Heart right ventricle (tissue), 16 donors: ENCODE measurements at regions of chr7 and their contacts with region 1.

Region 1: DNA sequence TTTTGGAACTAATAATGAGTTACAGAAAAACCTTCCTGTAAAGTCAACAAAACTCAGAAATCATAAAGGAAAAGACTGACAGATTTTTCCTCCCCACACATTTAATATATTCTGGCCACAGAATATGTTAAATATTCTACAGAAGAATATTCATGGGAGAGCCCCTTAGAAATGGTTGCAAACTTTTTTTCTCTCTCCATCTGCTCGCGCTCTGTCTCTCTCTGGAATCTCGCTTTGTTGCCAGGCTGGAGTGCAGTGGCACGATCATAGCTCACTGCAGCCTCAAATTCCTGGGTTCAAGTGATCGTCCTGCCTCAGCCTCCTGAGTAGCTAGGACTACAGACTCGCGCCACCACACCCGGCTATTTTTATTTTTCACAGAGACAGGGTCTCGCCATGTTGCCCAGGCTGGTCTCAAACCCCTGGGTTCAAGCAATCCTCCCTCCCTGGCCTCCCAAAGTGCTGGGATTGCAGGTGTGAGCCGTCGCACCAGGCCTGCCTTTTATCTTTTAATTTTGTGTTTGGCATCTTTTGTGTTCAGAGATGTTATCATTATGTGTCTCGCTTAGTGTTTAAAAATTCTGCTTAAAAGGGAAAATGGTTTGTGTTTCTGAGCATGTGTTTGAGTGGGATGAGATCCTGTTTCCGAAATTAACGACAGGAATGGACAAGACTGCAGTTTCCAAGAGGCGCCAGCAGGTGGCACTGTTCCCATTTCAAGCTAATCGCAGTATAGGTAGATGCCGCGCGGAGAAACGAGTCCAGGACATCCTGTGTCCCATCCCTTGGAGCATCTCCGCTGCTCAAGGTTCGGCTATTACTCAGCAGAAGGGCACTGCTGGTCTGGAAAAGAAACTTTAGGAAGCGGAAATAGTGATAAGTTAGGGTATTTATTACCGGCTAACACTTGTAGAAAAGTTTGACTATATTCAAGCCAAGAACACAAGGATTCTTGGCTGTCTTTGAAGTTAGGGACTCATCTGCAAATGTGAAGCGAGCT is 23.1 kb upstream of the ST7 start:
- DNase-seq: peak; percentile 80 to 82
- ATAC-seq: peak; percentile 76 to 92 (median 88)
- H3K4me3 ChIP-seq: no peak overlapping the region
- H3K27ac ChIP-seq: no peak overlapping the region
- H3K4me1 ChIP-seq: peaks cover 0 to 8% (median 0%) of the 10 kb centered on the region in 9 donors
- H3K27me3 ChIP-seq: no peaks in the 10 kb centered on the region
- CTCF ChIP-seq: peak; percentile 90 to 95 (median 92)

Region 2: DNA sequence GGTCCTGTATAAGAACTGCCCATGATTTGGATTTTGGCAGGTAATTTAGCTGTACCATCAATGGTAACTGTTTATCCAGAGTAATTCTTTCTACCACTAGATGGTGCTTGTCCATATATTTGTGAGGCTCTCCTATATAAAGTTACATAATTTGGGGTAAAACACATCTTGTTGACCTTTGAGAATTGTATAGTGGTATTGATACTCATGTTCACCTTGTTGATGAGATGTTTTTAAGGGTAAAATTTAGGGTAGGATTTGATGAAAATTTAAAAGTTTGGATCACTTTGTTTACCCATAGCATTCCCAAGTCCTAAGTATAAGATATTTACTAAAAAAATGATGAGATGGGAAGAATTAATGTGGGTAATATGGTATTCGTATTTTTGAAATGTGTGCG is 54.7 kb after region 1 on chr7:
- intact Hi-C with region 1: loop called in 5 of 10 experiments (anchors 10 kb)
- DNase-seq: no peak
- ATAC-seq: peak in 1 of 8 donors; percentile 33
- H3K4me3 ChIP-seq: no peak overlapping the region
- H3K27ac ChIP-seq: no peak overlapping the region
- H3K4me1 ChIP-seq: peaks cover 0 to 23% (median 0%) of the 10 kb centered on the region in 9 donors
- H3K27me3 ChIP-seq: no peaks in the 10 kb centered on the region
- CTCF ChIP-seq: peak; percentile 27 to 77 (median 71)

Region 3: GRCh38 chr7:117119192-117119924 is 189.1 kb after region 1 on chr7:
- intact Hi-C with region 1: loop called in 4 of 10 experiments (anchors 2 to 5 kb)
- DNase-seq: peak; percentile 71 to 82
- ATAC-seq: peak in 6 of 8 donors; percentile 45 to 76 (median 57)
- H3K4me3 ChIP-seq: no peak overlapping the region
- H3K27ac ChIP-seq: no peak overlapping the region
- H3K4me1 ChIP-seq: peaks cover 0 to 30% (median 8%) of the 10 kb centered on the region in 9 donors
- H3K27me3 ChIP-seq: no peaks in the 10 kb centered on the region
- CTCF ChIP-seq: peak; percentile 60 to 94 (median 89)

Region 4: GRCh38 chr7:117127585-117128168 is 197.5 kb after region 1 on chr7:
- intact Hi-C with region 1: loop called in 7 of 10 experiments (anchors 2 to 5 kb)
- DNase-seq: peak in 1 of 2 donors; percentile 49
- ATAC-seq: peak in 5 of 8 donors; percentile 37 to 64 (median 57)
- H3K4me3 ChIP-seq: no peak overlapping the region
- H3K27ac ChIP-seq: no peak overlapping the region
- H3K4me1 ChIP-seq: peaks cover 2 to 46% (median 24%) of the 10 kb centered on the region in 9 donors
- H3K27me3 ChIP-seq: no peaks in the 10 kb centered on the region
- CTCF ChIP-seq: peak; percentile 44 to 82 (median 78)

Region 5: DNA sequence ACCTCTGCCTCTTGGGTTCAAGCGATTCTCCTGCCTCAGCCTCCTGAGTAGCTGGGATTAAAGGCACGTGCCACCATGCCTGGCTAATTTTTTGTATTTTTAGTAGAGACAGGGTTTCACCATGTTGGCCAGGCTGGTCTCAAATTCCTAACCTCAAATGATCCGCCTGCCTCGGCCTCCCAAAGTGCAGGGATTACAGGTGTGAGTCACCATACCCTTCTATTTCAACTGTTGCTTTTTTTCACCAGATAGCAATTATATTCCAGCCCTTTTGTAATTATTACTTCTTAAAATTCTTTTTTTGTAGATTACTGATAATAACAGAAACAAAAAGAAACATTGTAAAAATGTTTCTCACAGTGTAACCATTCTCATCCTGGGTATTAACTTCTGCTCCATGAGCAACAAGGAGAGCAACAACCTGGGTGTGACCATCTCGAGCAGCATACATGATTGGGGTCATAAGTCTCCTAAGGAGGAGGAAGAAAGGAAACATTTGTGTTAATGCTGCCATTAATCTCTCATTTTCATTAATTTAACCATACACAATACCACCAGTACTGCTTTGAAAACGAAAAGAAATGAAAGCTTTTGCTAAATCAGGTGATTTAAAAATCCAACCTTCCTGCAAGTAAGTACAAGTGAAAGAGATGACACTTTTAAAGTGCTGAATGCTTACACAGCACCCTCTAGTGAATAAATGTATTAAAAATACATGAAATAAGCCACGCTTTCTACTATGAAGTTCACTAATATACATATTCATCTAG is 455.3 kb after region 1 on chr7:
- intact Hi-C with region 1: loop called in 1 of 10 experiments (anchors 10 kb)
- DNase-seq: no peak
- ATAC-seq: no peak
- H3K4me3 ChIP-seq: no peak overlapping the region
- H3K27ac ChIP-seq: no peak overlapping the region
- H3K4me1 ChIP-seq: no peaks in the 10 kb centered on the region
- H3K27me3 ChIP-seq: peaks cover 0 to 3% (median 0%) of the 10 kb centered on the region in 7 donors
- CTCF ChIP-seq: peak in 8 of 9 donors; percentile 14 to 59 (median 42)